ENCODE measurements at regions of chr21 and their contacts with region 1.

Region 1: DNA sequence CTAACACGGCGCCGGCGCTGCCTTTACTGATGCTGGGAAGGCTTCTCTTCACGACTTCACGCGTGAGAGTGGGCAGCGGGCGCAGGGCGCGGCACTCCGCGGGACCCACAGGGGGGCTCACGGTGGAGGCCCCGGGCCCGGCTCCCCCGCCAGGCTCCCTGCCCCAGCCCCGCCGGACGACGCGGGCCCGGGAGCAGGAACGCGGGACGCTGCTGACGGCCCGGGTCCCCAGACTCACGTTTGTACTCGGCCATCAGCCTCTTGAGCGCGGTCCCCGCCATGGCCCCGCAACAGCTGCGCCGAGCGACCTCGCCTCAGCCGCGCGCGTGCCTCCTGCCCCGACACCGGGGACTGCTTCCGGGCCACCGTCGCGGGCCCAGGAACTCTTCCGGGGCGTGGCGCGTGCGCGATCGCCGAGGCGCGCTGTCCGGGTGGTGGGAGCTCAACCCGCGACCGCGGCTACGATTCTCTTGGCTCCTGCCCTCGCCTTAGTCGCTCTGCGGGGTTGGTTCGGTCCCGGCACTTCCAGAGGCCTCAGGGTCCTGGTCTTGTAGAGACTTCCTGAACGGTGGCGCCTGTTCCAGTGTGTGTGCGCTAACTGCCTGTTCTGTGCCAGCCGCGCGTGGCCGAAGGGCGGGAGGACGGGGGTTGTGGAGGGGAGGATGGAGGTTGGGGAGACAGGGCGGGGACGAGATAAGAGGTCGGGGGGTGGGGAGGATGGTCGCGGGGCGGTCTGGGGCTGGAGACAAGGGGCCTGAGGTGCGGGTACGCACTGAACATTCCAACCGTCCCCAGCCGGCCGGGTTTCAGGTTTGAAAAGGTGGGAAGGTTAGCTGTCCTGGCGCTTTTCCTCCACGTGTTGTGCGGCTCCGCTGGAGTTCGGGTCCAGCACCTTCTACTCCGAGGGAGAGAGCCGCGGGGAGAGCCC is at the start of gene UBE2G2:
- DNase-seq: peak; percentile 74
- H3K4me3 Mint-ChIP-seq: peak within 1 kb of the TSS; percentile 89
- H3K27ac Mint-ChIP-seq: peak within 1 kb of the TSS; percentile 80
- H3K4me1 Mint-ChIP-seq: peaks cover 28% of the 10 kb centered on the region
- H3K27me3 Mint-ChIP-seq: no peaks in the 10 kb centered on the region
- CTCF ChIP-seq: no peak
- total RNA-seq, gene UBE2G2: 122 and 147 TPM in 2 replicates

Region 2: GRCh38 chr21:44482581-44483287 is 319.0 kb before region 1 on chr21:
- CTCF ChIA-PET with region 1: no interaction called
- POLR2A ChIA-PET with region 1: no interaction called
- intact Hi-C with region 1: no loop called
- DNase-seq: no peak
- H3K4me3 Mint-ChIP-seq: no peak overlapping the region
- H3K27ac Mint-ChIP-seq: no peak overlapping the region
- H3K4me1 Mint-ChIP-seq: no peaks in the 10 kb centered on the region
- H3K27me3 Mint-ChIP-seq: no peaks in the 10 kb centered on the region
- CTCF ChIP-seq: no peak

Region 3: DNA sequence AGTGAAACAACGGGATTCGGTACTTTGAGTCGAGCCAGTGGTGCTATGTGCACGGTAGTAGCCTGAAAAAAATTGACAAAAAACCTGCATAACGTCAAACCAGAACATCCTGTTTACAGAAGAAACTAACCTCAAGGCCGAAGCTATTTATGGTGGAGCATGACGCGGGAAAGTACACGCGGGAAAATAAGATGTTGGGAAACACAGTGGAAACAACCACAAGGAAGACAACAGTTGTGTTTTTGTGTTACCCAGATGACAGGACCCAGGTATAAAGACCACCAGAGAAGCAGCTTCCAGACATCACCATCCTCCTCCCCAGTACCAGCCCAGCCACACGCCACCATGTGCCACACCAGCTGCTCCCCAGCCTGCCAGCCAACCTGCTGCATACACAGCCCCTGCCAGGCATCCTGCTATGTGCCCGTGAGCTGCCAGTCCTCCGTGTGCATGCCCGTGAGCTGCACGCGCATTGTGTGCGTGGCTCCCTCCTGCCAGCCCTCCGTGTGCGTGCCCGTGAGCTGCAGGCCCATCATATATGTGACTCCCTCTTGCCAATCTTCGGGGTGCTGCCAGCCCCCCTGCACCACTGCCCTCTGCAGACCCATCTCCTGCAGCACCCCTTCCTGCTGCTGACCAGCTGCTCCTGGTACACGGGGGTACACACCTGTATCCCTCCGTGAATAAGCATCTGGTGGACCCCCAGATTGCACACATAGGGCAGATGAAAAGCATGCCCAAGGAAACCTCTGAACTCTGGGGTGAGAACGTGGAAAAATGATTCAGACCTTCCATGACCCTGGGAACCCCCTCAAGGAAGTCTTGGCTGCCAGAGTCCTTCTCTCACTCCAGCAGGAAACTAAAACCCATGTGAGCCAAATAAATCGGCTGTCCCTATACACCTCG is 143.8 kb before region 1 on chr21 and contains the start of gene KRTAP12-3:
- CTCF ChIA-PET with region 1: no interaction called
- POLR2A ChIA-PET with region 1: no interaction called
- intact Hi-C with region 1: no loop called
- DNase-seq: no peak
- H3K4me3 Mint-ChIP-seq: no peak within 1 kb of the TSS
- H3K27ac Mint-ChIP-seq: no peak within 1 kb of the TSS
- H3K4me1 Mint-ChIP-seq: no peaks in the 10 kb centered on the region
- H3K27me3 Mint-ChIP-seq: peaks cover 80% of the 10 kb centered on the region
- CTCF ChIP-seq: no peak
- total RNA-seq, gene KRTAP12-3: not detected in 2 replicates

Region 4: DNA sequence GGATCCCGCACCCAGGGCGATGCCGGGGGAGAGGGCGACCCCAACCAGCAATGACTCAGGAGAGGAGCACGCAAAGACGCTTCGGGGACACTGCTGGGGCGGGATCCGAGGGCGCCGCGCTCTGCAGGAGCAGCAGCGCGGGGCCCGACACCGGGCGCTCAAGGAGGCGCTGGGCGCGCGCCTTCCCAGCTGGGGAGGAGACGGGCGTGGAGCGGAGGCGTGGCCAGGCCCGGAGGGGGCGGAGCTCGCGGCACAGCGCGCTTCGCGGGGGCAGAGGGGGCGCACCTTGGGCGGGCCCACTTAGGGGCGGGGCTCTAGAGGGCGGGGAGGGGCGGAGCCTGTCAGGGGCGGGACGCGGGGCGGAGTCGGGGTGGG is 15.8 kb after region 1 on chr21:
- CTCF ChIA-PET with region 1: interaction called, 10 read pairs
- POLR2A ChIA-PET with region 1: interaction called, 11 read pairs
- intact Hi-C with region 1: no loop called
- DNase-seq: peak; percentile 84
- H3K4me3 Mint-ChIP-seq: peak overlapping the region; percentile 72
- H3K27ac Mint-ChIP-seq: no peak overlapping the region
- H3K4me1 Mint-ChIP-seq: peaks cover 10% of the 10 kb centered on the region
- H3K27me3 Mint-ChIP-seq: no peaks in the 10 kb centered on the region
- CTCF ChIP-seq: no peak

Region 5: GRCh38 chr21:44845399-44846223 is 43.9 kb after region 1 on chr21:
- CTCF ChIA-PET with region 1: interaction called, 3 read pairs
- POLR2A ChIA-PET with region 1: interaction called, 3 read pairs
- intact Hi-C with region 1: loop called (anchors 2 kb)
- DNase-seq: peak; percentile 63
- H3K4me3 Mint-ChIP-seq: peak overlapping the region; percentile 16
- H3K27ac Mint-ChIP-seq: no peak overlapping the region
- H3K4me1 Mint-ChIP-seq: no peaks in the 10 kb centered on the region
- H3K27me3 Mint-ChIP-seq: no peaks in the 10 kb centered on the region
- CTCF ChIP-seq: peak; percentile 32

Region 6: DNA sequence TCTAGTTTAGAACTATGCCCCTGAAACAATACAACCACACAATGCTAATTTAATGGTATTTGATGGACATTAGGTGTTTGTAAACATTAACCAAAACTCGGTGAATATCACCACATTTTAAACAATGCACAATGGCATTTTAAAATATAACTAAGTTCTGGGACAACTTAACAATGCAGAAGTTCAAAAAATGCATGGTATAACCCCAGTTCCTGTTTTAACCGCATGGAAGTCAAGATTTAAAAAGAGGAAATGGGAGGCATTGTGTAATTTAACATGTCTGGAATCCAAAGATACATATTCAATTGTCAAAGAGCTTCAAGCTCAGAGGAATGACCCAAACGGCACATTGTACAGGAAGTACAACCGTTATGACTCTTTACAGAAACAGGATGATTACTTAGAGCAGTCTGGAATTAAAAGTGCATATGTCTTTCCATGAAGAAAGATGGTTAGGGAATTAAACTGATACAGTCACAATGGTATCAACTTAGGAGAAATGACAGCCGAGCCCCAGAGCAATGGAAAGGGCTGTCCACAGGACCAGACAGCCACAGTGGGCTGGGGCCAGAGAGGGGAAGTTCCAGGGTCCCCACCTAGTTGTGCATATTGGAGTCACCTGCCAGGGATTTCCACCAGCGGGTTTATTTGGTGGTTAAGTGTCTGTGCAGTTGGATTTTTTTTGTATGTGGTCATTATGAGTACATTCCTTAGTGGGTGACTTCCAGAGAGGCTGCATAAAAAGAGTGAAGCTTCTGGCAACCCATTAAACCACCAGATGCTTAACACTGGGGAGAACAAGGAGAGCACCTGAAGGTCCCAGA is 79.2 kb after region 1 on chr21:
- CTCF ChIA-PET with region 1: interaction called, 36 read pairs
- POLR2A ChIA-PET with region 1: interaction called, 161 read pairs
- intact Hi-C with region 1: no loop called
- DNase-seq: peak; percentile 18
- H3K4me3 Mint-ChIP-seq: no peak overlapping the region
- H3K27ac Mint-ChIP-seq: peak overlapping the region; percentile 98
- H3K4me1 Mint-ChIP-seq: peaks cover 32% of the 10 kb centered on the region
- H3K27me3 Mint-ChIP-seq: no peaks in the 10 kb centered on the region
- CTCF ChIP-seq: no peak

Region 7: DNA sequence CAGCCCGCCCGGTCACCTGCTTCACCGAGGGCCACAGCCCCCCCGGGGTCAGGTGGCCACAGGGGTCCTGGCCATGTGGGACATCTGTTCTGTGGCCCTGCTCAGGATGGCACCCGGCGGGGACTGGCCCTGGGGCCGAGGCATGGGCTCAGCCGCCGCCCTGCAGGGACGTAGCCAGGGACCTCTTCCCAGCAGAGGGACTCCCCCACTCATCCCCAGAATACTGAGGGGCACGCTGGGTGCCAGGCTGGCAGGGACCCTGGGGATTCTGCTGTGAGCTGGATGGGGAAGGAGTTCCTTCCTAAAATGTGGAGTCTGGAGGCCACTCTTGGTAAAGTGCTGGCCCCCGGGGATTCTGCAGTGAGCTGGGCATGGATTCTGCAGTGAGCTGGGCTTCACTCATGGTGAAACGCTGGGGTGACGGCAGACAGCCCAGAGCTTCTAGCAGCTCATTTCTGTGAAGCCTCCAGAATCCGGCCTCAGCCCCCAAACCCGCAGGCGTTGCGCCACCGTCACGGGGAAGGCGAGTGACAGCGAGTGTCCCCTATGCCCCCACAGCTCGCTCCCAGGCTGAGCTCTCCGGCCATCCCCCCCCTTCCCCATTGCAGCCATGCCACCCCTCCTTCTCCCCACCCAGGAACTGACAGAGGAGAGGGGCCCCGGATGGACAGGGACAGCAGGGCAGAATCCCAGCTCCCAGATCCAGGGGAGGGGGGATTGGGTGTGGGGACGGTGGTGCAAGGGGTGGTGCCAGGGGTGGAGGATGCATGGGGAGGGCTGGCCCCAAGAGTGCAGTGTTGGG is 117.6 kb after region 1 on chr21:
- CTCF ChIA-PET with region 1: interaction called, 48 read pairs
- POLR2A ChIA-PET with region 1: interaction called, 11 read pairs
- intact Hi-C with region 1: no loop called
- DNase-seq: no peak
- H3K4me3 Mint-ChIP-seq: no peak overlapping the region
- H3K27ac Mint-ChIP-seq: no peak overlapping the region
- H3K4me1 Mint-ChIP-seq: peaks cover 30% of the 10 kb centered on the region
- H3K27me3 Mint-ChIP-seq: no peaks in the 10 kb centered on the region
- CTCF ChIP-seq: no peak

Region 8: DNA sequence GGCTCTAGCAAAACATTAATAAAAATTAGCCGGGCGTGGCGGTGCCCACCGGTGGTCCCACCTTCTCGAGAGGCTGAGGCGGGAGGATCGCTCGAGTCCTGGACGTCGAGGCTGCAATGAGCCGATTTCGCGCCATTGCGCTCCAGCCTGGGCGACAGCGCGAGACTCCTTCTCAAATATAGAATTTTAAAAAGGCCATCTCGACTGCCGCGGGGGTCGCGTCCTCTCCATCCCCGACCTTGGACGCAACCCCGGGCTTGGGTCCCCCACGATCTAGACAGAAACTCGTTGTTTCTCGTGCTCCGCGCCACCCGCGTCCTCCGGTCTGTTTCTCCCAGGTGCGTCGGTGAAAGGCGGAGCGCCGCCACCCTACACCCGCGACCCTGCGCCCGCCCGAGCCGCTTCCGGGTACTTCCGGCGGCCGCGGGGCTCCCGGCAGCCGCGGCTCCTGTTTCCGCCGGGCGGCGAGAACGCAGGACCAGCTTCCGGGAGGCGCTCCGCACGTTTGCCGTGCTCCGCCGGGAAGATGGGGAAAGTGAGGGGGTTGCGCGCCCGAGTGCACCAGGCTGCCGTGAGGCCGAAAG is 137.9 kb after region 1 on chr21 and contains the start of gene SLX9:
- CTCF ChIA-PET with region 1: interaction called, 32 read pairs
- POLR2A ChIA-PET with region 1: interaction called, 33 read pairs
- intact Hi-C with region 1: no loop called
- DNase-seq: peak; percentile 77
- H3K4me3 Mint-ChIP-seq: peak within 1 kb of the TSS; percentile 85
- H3K27ac Mint-ChIP-seq: peak within 1 kb of the TSS; percentile 61
- H3K4me1 Mint-ChIP-seq: peaks cover 30% of the 10 kb centered on the region
- H3K27me3 Mint-ChIP-seq: no peaks in the 10 kb centered on the region
- CTCF ChIP-seq: no peak
- total RNA-seq, gene SLX9: 40.4 and 58.7 TPM in 2 replicates

Region 9: DNA sequence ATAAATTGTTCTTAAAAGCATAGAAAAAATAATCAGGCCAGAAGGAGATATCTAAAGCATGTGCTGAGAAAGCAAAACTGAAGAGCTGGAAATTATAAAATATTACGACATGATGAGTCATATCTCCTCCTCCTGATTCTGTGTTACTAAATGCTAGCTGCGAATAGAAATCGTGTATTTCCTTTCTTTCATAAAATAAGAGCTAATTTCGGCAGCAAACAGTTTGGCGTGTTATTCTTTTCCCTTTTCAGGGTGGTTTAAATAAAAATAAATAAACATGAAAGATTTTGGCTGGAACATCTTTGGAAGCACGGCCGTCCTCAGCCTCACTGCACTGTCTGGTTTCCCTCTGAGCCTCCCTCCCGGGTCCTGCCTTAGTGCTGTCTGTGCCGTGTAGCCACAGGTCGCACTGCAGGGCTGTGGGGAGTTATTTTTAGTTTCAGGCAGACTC is 328.6 kb after region 1 on chr21:
- CTCF ChIA-PET with region 1: interaction called, 7 read pairs
- POLR2A ChIA-PET with region 1: interaction called, 10 read pairs
- intact Hi-C with region 1: loop called (anchors 2 kb)
- DNase-seq: peak; percentile 67
- H3K4me3 Mint-ChIP-seq: peak overlapping the region; percentile 61
- H3K27ac Mint-ChIP-seq: peak overlapping the region; percentile 86
- H3K4me1 Mint-ChIP-seq: peaks cover 14% of the 10 kb centered on the region
- H3K27me3 Mint-ChIP-seq: no peaks in the 10 kb centered on the region
- CTCF ChIP-seq: no peak

Measured in MCF 10A (cell line).